Activated B cell treated with CpG ODN at 0.5 μM for 24 hours (primary cell): ENCODE measurements at regions of chr3 and their contacts with region 1.

Region 1: DNA sequence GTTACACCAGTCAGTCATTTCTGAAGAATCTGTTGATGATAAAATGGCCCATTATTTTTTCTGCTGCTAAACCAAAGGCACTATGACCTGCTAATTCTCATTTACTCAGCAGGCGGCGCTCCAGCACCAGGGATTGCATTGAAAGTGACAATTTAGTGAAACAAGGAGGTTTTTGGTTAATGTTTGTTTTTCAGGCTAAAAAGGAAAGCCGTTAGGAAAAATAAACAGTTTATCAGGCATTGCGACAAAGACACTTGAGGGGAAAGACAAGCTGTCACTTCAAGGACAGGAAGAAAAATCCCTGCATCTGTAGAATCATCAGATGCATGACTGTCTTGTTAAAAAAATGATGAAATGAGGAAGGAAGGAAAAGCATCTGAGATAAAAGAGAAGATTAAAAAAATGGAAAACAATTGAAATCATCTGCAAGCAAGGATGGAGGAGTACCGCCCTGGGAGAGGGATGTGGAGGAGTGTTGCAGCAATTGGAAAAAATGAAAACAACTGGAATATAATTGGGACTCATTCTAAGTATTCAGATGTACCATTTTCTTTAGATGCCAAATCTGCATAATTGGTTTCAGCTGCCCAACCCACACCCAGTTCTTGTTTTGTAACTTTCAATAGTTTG is 54.0 kb downstream of the NR1D2 start:
- DNase-seq: peak; percentile 41
- ATAC-seq: peak; percentile 52
- H3K4me3 Mint-ChIP-seq: peak overlapping the region; percentile 9
- H3K27ac Mint-ChIP-seq: no peak overlapping the region
- H3K4me1 Mint-ChIP-seq: peaks cover 6% of the 10 kb centered on the region
- H3K27me3 Mint-ChIP-seq: peaks cover 3% of the 10 kb centered on the region
- CTCF ChIP-seq: peak; percentile 57

Region 2: DNA sequence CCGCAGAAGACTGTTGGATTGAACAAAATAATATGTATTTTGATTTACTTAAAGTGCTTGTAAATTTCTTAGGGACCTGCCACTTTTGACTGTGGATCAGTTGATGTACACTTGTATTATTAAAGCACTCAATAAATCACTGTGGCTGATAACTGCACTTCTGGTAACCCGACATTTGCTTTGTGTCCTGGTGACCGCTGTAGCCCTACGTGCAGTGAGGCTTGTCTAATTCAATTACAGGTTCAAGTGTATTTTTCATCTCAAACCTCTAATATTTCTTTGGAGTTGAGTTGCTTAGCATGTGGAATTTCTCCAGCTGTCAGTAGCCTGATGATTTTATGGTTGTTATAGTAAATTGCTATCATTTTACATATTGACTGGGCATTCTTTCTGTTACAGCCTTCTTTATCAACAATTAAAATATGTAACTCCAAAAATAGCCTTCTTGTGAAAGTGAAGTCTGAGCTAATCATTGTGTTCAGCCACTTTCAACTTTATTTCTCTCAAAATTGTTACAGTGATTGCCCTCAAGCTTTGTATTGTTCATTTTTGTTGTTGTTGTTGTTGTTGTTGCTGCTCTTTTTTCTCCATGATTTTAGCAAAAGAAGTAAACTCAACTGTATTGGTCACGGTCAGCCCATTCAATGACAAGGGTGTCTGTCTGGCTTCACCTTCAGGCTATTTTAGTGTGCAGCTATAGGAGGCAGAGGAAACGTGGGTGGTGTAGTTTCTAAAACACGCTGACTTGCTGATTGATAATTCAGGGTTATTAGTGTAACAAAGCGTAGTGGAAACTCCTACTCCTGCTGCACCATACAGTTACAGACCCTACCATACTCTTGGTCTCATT is 408.5 kb before region 1 on chr3:
- CTCF ChIA-PET with region 1: no interaction called
- POLR2A ChIA-PET with region 1: no interaction called
- intact Hi-C with region 1: no loop called
- DNase-seq: no peak
- ATAC-seq: no peak
- H3K4me3 Mint-ChIP-seq: no peak overlapping the region
- H3K27ac Mint-ChIP-seq: no peak overlapping the region
- H3K4me1 Mint-ChIP-seq: peaks cover 26% of the 10 kb centered on the region
- H3K27me3 Mint-ChIP-seq: no peaks in the 10 kb centered on the region
- CTCF ChIP-seq: no peak

Region 3: DNA sequence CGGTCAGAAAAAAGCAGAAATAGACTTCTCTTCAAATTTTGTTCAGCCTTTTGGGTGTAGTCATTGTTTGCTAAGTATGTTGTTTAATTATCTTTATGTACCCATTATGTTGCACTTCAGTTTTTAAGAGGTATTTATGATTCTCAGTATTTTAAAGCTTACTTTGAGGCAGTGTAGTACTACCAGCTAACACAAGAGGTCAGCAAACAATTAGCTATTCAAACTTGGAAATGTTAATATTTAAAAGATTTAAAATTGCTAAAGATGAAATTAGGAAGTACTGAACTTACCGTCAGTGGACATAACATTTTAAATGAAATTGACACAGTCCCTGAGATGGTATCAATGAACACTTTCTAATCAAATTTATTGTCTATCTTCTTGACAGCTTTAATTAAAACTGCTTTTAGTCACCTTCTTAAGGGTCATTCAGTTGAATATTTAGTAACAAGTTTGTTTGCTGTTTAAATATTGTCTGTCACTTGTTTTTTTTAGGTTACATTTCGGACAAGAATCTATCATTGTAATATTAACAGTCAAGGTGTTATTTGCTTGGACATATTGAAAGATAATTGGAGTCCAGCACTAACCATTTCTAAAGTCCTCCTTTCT is 110.4 kb before region 1 on chr3:
- CTCF ChIA-PET with region 1: interaction called, 5 read pairs
- POLR2A ChIA-PET with region 1: no interaction called
- intact Hi-C with region 1: loop called (anchors 2 kb)
- DNase-seq: no peak
- ATAC-seq: peak; percentile 42
- H3K4me3 Mint-ChIP-seq: no peak overlapping the region
- H3K27ac Mint-ChIP-seq: no peak overlapping the region
- H3K4me1 Mint-ChIP-seq: peaks cover 8% of the 10 kb centered on the region
- H3K27me3 Mint-ChIP-seq: no peaks in the 10 kb centered on the region
- CTCF ChIP-seq: peak; percentile 78

Region 4: GRCh38 chr3:24110051-24110450 is 110.9 kb after region 1 on chr3:
- CTCF ChIA-PET with region 1: no interaction called
- POLR2A ChIA-PET with region 1: interaction called, 12 read pairs
- intact Hi-C with region 1: no loop called
- DNase-seq: no peak
- ATAC-seq: no peak
- H3K4me3 Mint-ChIP-seq: no peak overlapping the region
- H3K27ac Mint-ChIP-seq: no peak overlapping the region
- H3K4me1 Mint-ChIP-seq: no peaks in the 10 kb centered on the region
- H3K27me3 Mint-ChIP-seq: peaks cover 8% of the 10 kb centered on the region
- CTCF ChIP-seq: no peak

Region 5: GRCh38 chr3:24177201-24177600 is 178.1 kb after region 1 on chr3:
- CTCF ChIA-PET with region 1: no interaction called
- POLR2A ChIA-PET with region 1: no interaction called
- intact Hi-C with region 1: no loop called
- DNase-seq: no peak
- ATAC-seq: no peak
- H3K4me3 Mint-ChIP-seq: no peak overlapping the region
- H3K27ac Mint-ChIP-seq: no peak overlapping the region
- H3K4me1 Mint-ChIP-seq: no peaks in the 10 kb centered on the region
- H3K27me3 Mint-ChIP-seq: no peaks in the 10 kb centered on the region
- CTCF ChIP-seq: no peak

Region 6: DNA sequence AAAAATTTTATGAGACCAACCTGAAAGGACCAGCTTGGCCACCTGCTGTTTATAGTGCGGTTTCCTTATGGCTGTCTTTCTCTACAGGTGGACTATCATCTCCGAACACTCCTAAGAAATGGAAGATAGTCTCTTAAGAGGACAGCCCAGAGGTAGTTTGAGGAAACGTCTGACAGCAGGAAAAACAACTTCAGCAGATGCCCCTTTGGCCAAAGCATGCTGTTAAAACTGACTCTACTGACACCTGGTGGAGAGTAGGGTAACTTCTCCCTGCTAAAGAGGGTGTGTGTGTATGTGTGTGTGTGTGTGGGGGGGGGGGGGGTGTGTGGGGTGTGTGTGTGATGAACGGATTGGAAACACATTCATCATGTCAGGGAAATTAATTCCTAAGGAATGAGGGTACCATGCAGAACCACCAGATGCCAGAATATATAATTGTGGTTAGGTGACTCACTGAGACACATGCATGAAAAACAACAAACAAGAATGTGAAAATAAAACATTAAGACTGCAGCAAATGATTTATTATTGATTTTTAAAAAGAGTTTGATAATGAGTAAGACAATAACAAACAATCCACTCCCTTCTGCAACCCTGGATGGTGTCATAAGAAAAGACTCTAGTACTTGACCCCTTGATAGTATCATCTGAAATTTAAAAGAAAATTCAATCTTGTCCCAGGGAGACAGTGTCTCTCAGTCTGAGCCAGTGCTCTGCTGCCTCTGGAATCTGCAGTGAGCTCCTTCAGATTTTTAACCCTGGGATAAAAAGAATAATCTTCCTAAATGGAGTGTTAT is 239.0 kb after region 1 on chr3:
- CTCF ChIA-PET with region 1: interaction called, 7 read pairs
- POLR2A ChIA-PET with region 1: no interaction called
- intact Hi-C with region 1: loop called (anchors 1 kb)
- DNase-seq: no peak
- ATAC-seq: peak; percentile 75
- H3K4me3 Mint-ChIP-seq: no peak overlapping the region
- H3K27ac Mint-ChIP-seq: no peak overlapping the region
- H3K4me1 Mint-ChIP-seq: no peaks in the 10 kb centered on the region
- H3K27me3 Mint-ChIP-seq: no peaks in the 10 kb centered on the region
- CTCF ChIP-seq: no peak

Region 7: DNA sequence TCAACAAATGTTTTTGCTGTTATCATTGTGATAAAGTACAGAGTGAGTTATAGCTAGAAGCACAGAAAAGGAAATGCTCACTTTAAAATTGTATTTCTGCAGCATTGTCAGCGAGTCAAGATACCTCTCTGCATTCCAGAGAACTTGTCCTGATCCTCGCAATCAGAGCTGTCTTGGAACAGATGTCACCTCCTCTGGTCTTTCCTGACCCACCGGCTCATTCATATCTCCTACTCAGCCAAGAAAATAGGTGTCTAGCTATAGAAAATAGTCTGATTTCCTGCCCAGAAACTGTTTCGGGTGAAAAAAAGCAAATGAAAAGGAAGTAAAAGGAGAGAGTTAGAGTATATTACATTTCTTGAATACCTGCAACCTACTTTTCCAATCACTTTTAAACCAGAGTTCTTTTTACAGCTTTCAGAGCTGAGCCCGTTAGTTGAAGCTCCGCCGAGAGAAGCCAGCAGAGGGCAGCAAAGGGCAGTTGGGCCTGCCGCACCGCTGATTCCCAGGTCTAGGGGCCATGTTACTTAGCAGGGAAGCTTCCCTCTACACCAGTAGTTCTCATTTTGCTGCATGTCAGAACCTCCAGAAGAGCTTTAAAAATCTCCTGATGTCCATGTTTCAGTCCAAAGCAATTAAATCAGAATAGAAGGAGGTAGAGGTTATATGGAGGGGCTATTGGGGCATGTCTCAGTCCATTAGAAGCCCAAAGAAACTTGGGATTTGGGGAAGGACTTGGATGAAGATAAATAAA is 681.3 kb after region 1 on chr3:
- CTCF ChIA-PET with region 1: interaction called, 3 read pairs
- POLR2A ChIA-PET with region 1: no interaction called
- intact Hi-C with region 1: loop called (anchors 2 kb)
- DNase-seq: peak; percentile 28
- ATAC-seq: no peak
- H3K4me3 Mint-ChIP-seq: no peak overlapping the region
- H3K27ac Mint-ChIP-seq: no peak overlapping the region
- H3K4me1 Mint-ChIP-seq: peaks cover 7% of the 10 kb centered on the region
- H3K27me3 Mint-ChIP-seq: no peaks in the 10 kb centered on the region
- CTCF ChIP-seq: peak; percentile 84

Region 8: GRCh38 chr3:25594007-25594502 is 1594.9 kb after region 1 on chr3:
- CTCF ChIA-PET with region 1: no interaction called
- POLR2A ChIA-PET with region 1: no interaction called
- intact Hi-C with region 1: loop called (anchors 1 kb)
- DNase-seq: no peak
- ATAC-seq: peak; percentile 64
- H3K4me3 Mint-ChIP-seq: no peak overlapping the region
- H3K27ac Mint-ChIP-seq: no peak overlapping the region
- H3K4me1 Mint-ChIP-seq: no peaks in the 10 kb centered on the region
- H3K27me3 Mint-ChIP-seq: no peaks in the 10 kb centered on the region
- CTCF ChIP-seq: peak; percentile 33